ENCODE measurements at regions of chr5 and their contacts with region 1.

Region 1: GRCh38 chr5:94613583-94613982 is 4.8 kb downstream of the KIAA0825 start:
- DNase-seq: peak; percentile 44
- H3K4me3 ChIP-seq: no peak overlapping the region
- H3K27ac ChIP-seq: no peak overlapping the region
- H3K4me1 ChIP-seq: peaks cover 8% of the 10 kb centered on the region
- CTCF ChIP-seq: peak; percentile 70

Region 2: GRCh38 chr5:94731471-94731870 is 117.9 kb after region 1 on chr5:
- CTCF ChIA-PET with region 1: no interaction called
- POLR2A ChIA-PET with region 1: no interaction called
- intact Hi-C with region 1: loop called (anchors 5 kb)
- DNase-seq: no peak
- H3K4me3 ChIP-seq: no peak overlapping the region
- H3K27ac ChIP-seq: no peak overlapping the region
- H3K4me1 ChIP-seq: no peaks in the 10 kb centered on the region
- CTCF ChIP-seq: no peak